ENCODE measurements at regions of chr17 and their contacts with region 1.

Region 1: GRCh38 chr17:59558977-59559376 is 6.4 kb upstream of the DHX40 start:
- DNase-seq: peak; percentile 42
- H3K4me3 ChIP-seq: no peak overlapping the region
- H3K27ac ChIP-seq: no peak overlapping the region
- H3K4me1 ChIP-seq: no peaks in the 10 kb centered on the region
- H3K27me3 ChIP-seq: no peaks in the 10 kb centered on the region
- CTCF ChIP-seq: peak; percentile 69
- EP300 ChIP-seq: no peak
- RAD21 ChIP-seq: peak; percentile 86

Region 2: DNA sequence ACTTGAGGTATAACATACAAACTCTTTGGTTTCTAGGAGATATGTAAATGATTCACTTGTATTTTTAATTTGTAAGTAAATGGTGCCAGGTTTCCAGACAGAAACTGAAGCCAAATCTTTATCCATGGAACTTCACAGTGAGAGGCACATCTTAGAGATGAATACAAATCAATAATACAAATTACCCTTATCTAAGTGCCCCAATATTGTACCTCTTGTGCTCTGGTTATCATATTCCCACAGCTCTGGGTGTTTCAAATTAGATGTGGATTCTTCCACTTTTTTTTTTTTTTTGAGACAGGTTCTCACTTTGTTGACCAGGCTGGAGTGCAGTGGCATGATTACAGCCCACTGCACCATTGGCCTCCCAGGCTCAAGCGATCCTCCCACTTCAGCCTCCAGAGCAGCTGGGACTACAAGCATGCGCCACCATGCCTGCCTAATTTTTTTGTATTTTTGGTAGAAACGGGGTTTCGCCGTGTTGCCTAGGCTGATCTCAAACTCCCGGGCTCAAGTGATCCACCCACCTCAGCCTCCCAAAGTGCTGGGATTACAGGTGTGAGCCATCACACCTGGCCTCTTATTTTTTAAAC is 31.6 kb before region 1 on chr17:
- CTCF ChIA-PET with region 1: interaction called, 105 read pairs
- POLR2A ChIA-PET with region 1: no interaction called
- DNase-seq: no peak
- H3K4me3 ChIP-seq: no peak overlapping the region
- H3K27ac ChIP-seq: no peak overlapping the region
- H3K4me1 ChIP-seq: no peaks in the 10 kb centered on the region; a peak in 1 of 4 replicates
- H3K27me3 ChIP-seq: no peaks in the 10 kb centered on the region
- CTCF ChIP-seq: no peak
- EP300 ChIP-seq: no peak
- RAD21 ChIP-seq: no peak

Region 3: GRCh38 chr17:59547131-59547915 is 11.7 kb before region 1 on chr17:
- CTCF ChIA-PET with region 1: interaction called, 14 read pairs
- POLR2A ChIA-PET with region 1: no interaction called
- DNase-seq: peak; percentile 87
- H3K4me3 ChIP-seq: no peak overlapping the region
- H3K27ac ChIP-seq: peak overlapping the region; percentile 31 to 93; a peak in 3 of 4 replicates
- H3K4me1 ChIP-seq: peaks cover 9 to 11% of the 10 kb centered on the region in 2 experiments
- H3K27me3 ChIP-seq: no peaks in the 10 kb centered on the region
- CTCF ChIP-seq: no peak
- EP300 ChIP-seq: peak in 1 of 2 experiments; percentile 94; a peak in 2 of 4 replicates
- RAD21 ChIP-seq: peak; percentile 14; the same call in 1 of the 2 replicates

Region 4: GRCh38 chr17:59638553-59638952 is 79.6 kb after region 1 on chr17:
- CTCF ChIA-PET with region 1: no interaction called
- POLR2A ChIA-PET with region 1: no interaction called
- DNase-seq: no peak
- H3K4me3 ChIP-seq: no peak overlapping the region
- H3K27ac ChIP-seq: no peak overlapping the region
- H3K4me1 ChIP-seq: peaks cover 5 to 33% of the 10 kb centered on the region in 2 experiments
- H3K27me3 ChIP-seq: no peaks in the 10 kb centered on the region
- CTCF ChIP-seq: no peak
- EP300 ChIP-seq: no peak
- RAD21 ChIP-seq: no peak

Region 5: GRCh38 chr17:59651346-59651745 is 92.4 kb after region 1 on chr17:
- CTCF ChIA-PET with region 1: no interaction called
- POLR2A ChIA-PET with region 1: no interaction called
- DNase-seq: no peak
- H3K4me3 ChIP-seq: no peak overlapping the region
- H3K27ac ChIP-seq: no peak overlapping the region
- H3K4me1 ChIP-seq: no peaks in the 10 kb centered on the region
- H3K27me3 ChIP-seq: no peaks in the 10 kb centered on the region
- CTCF ChIP-seq: no peak
- EP300 ChIP-seq: no peak
- RAD21 ChIP-seq: no peak

Region 6: DNA sequence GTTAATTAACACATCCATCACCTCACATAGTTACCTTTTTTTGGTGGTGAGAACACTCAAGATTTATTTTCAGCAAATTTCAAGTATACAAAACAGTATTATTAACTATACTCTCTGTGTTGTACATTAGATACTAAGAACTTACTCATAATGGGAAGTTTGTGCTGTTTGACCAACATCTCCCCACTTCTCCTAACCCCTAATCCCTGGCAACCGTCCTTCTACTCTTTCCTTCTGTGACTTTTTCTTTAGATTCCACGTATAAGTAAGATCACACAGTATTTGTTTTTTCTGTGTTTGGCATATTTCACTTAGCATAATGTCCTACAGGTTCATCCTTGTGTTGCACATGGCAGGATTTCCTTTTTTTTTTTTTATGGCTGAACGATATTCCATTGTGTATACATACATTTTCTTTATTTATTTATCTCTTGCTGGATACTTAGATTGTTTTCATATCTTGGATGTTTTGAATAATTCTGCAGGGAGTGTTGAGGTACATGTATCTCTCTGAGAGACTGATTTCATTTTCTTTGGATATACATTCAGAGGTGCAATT is 1060.0 kb after region 1 on chr17:
- CTCF ChIA-PET with region 1: no interaction called
- POLR2A ChIA-PET with region 1: no interaction called
- DNase-seq: no peak
- H3K4me3 ChIP-seq: no peak overlapping the region
- H3K27ac ChIP-seq: no peak overlapping the region
- H3K4me1 ChIP-seq: 0 out of 4 replicates have a peak, but pooled peaks cover 0 to 6% of the 10 kb centered on the region in 2 experiments
- H3K27me3 ChIP-seq: no peaks in the 10 kb centered on the region
- CTCF ChIP-seq: no peak
- EP300 ChIP-seq: no peak
- RAD21 ChIP-seq: no peak